B cell (primary cell): ENCODE measurements at regions of chr9 and their contacts with region 1.

Region 1: DNA sequence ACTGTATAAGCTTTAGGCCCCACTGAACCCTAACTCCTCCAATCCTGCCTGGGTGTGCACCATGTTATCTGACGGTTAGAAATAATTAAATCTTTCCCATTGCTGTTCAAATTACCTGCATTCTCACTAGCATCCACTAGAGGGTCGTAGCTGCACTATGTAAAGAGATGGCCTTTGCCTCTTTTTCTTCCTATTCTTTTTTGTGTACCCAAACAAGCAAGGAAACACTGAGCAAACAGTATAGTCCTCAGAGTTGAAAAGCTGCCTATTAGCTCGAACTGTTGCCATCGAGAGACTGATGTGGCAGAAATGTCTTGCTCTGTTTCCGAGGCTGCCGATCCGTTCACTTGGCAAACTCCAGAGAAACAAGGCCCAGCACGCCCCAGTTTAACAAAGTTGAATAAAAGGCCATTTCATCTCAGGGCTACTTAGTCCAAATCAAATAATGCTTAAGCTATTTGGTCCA is 163.8 kb upstream of the TRPM3 start:
- DNase-seq: peak; percentile 54
- ATAC-seq: peak; percentile 61
- H3K4me3 ChIP-seq: no peak overlapping the region
- H3K4me3 Mint-ChIP-seq: no peak overlapping the region
- H3K27ac ChIP-seq: no peak overlapping the region
- H3K27ac Mint-ChIP-seq: no peak overlapping the region
- H3K4me1 ChIP-seq: no peaks in the 10 kb centered on the region
- H3K4me1 Mint-ChIP-seq: no peaks in the 10 kb centered on the region
- H3K27me3 ChIP-seq: no peaks in the 10 kb centered on the region
- H3K27me3 Mint-ChIP-seq: no peaks in the 10 kb centered on the region
- CTCF ChIP-seq: peak; percentile 93

Region 2: GRCh38 chr9:70935856-70936255 is 349.4 kb before region 1 on chr9:
- CTCF ChIA-PET with region 1: no interaction called
- POLR2A ChIA-PET with region 1: no interaction called
- intact Hi-C with region 1: no loop called
- DNase-seq: no peak
- ATAC-seq: no peak
- H3K4me3 ChIP-seq: no peak overlapping the region
- H3K4me3 Mint-ChIP-seq: no peak overlapping the region
- H3K27ac ChIP-seq: no peak overlapping the region
- H3K27ac Mint-ChIP-seq: no peak overlapping the region
- H3K4me1 ChIP-seq: no peaks in the 10 kb centered on the region
- H3K4me1 Mint-ChIP-seq: no peaks in the 10 kb centered on the region
- H3K27me3 ChIP-seq: no peaks in the 10 kb centered on the region
- H3K27me3 Mint-ChIP-seq: no peaks in the 10 kb centered on the region
- CTCF ChIP-seq: no peak

Region 3: GRCh38 chr9:72271613-72272478 is 986.6 kb after region 1 on chr9:
- CTCF ChIA-PET with region 1: interaction called, 17 read pairs
- POLR2A ChIA-PET with region 1: no interaction called
- intact Hi-C with region 1: no loop called
- DNase-seq: peak; percentile 63
- ATAC-seq: peak; percentile 56
- H3K4me3 ChIP-seq: no peak overlapping the region
- H3K4me3 Mint-ChIP-seq: no peak overlapping the region
- H3K27ac ChIP-seq: no peak overlapping the region
- H3K27ac Mint-ChIP-seq: no peak overlapping the region
- H3K4me1 ChIP-seq: no peaks in the 10 kb centered on the region
- H3K4me1 Mint-ChIP-seq: no peaks in the 10 kb centered on the region
- H3K27me3 ChIP-seq: no peaks in the 10 kb centered on the region
- H3K27me3 Mint-ChIP-seq: peaks cover 20% of the 10 kb centered on the region
- CTCF ChIP-seq: peak; percentile 99